Transverse colon (tissue), 4 donors: ENCODE measurements at regions of chr11 and their contacts with region 1.

Region 1: GRCh38 chr11:41461057-41461681 is 1.7 kb upstream of the LRRC4C start:
- DNase-seq: no peak
- H3K4me3 ChIP-seq: no peak overlapping the region
- H3K27ac ChIP-seq: no peak overlapping the region
- H3K4me1 ChIP-seq: no peaks in the 10 kb centered on the region
- H3K27me3 ChIP-seq: peaks cover 27% of the 10 kb centered on the region
- CTCF ChIP-seq: peak; percentile 64 to 79 (median 69)
- EP300 ChIP-seq: no peak
- POLR2A ChIP-seq: no peak

Region 2: DNA sequence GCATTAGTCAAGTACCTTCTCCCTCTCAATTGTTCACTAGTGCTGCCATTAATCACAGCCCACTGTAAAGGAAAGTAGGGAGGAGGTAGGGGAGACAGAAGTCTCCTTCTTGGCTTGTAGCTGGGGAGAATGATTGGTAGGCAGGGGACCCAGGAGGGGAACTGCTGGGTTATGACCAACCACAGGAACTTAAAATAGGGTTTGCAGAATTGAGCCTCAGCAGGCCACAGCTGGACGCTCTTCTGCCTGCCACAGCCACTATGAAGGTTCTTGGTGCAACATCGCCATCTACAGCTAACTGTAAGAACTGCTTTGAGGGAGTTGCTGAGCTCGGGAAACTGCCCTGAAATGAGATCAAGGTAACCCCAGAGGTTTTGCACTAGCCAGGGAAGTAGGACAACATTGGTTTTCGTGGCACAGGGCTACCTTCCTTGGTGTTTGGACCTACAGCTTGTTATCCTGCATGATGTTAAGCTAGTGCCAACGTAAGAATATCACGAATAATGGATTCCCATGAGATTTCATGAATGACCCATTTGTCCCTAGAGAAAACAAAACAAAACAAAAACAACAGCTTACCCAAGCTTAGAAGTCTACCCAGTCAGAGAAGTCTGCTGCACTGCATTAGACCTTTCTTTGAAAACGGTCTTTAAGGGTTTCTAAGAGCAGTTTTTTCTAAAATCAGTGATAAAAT is 1063.5 kb after region 1 on chr11:
- in situ Hi-C with region 1: loop called in 3 of 4 experiments (anchors 10 to 25 kb)
- intact Hi-C with region 1: no loop called
- DNase-seq: peak; percentile 28
- H3K4me3 ChIP-seq: no peak overlapping the region
- H3K27ac ChIP-seq: no peak overlapping the region
- H3K4me1 ChIP-seq: no peaks in the 10 kb centered on the region
- H3K27me3 ChIP-seq: no peaks in the 10 kb centered on the region
- CTCF ChIP-seq: peak; percentile 55 to 71 (median 64)
- EP300 ChIP-seq: no peak
- POLR2A ChIP-seq: no peak